ENCODE measurements at regions of chr20 and their contacts with region 1.

Region 1: DNA sequence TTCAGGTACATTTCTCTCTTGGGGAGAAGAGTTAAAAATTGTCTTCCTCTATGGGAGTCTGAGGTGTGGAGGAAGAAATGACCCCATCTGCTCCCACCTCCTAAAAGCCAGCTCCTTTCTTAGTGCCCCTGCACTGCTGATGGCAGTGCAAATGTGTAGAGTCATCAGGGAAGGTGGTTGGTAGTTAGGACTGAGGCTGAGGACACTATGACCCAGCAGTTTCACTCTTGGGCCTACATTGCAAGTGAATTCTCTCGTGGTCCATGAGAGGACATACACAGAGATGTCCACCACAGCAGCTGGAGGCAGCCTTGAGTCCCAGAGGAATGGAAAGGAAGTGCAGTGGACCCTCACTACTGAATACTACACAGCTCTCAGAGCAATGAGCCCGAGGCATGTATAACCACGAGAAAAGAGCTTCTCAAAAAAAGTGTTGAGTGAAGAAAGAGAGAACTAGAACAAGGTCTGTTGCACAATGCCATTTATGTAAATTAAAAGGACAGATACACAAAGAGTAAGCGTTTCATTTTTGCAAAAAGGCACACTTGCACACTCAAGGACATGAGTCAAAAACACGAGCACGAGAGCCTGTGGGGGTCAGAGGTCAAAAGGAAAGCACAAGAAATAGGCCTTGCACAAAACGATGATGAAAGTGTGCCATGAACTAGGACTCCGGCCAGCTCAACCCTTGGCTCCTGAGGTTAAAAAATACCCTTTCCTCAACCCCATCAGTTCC is 308.2 kb upstream of the PRND start:
- DNase-seq: no peak
- ATAC-seq: no peak

Region 2: DNA sequence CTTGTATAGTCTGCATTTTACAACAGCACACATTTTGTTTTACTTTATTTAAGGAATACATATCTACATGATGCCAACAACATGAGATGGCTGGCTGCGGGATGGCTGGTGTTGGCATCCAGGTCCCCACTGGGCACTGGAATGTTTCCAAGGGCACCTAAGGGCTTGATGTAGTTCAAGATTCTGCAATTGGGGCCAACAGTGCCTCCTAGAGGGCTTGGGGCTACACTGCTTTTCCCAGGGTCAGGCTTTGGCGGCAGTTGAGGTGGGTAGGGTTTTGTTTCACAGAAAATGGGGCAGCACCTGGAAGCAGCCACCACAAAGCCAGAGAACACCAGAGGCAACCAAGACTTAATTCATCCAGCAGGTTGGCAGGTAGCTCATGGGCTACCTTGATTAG is 106.0 kb after region 1 on chr20:
- intact Hi-C with region 1: loop called (anchors 10 kb)
- DNase-seq: no peak
- ATAC-seq: no peak

Region 3: GRCh38 chr20:5397393-5397792 is 983.9 kb after region 1 on chr20:
- intact Hi-C with region 1: no loop called
- DNase-seq: no peak
- ATAC-seq: no peak

Measured in sciatic nerve (tissue), 2 donors.